ENCODE measurements at regions of chr6 and their contacts with region 1.

Region 1: DNA sequence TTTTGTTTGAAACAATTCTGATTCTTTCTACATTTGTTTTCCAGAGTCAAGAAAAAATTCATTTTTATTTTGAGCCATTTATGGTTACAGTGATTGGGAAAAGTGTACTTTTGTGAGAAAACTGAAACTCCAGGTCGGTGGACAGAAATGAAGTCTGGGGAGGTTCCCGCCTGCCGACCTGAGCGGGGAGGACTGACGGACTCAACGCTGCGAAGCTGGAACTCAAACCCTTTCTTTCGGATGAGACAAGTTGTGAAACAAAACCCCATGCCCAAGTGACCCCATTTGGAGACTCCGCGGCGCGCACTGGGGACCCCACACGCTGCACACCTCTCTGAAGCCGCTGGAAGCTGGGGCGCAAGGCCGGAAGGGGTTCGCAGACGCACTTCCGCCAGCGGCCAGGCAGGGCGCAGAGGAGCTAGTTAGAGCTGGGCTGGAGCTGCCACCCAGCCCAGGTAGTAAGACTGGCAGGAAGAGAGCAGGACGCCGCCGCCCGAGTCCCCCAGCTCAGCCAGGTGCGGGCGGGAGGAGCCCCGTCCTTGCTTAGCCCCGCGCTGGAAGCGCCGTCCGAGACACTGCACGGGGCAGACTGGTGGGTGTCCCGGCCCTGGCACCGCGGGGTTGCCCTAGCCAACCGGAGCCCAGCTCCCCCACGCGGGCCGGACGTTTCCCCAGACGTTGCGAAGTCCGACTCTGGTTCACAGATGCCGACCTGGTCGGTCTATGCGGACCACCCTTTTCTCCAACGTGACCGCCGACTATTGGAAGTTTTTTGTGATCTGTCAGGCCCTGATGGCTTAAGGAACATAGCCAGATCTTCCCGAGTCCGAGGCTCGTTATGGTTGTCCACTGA is 19.8 kb upstream of the ZSCAN16 start:
- DNase-seq: peak; percentile 86
- ATAC-seq: peak; percentile 100
- H3K4me3 Mint-ChIP-seq: peak overlapping the region; percentile 88
- H3K27ac Mint-ChIP-seq: peak overlapping the region; percentile 82
- H3K4me1 Mint-ChIP-seq: peaks cover 10% of the 10 kb centered on the region
- H3K27me3 Mint-ChIP-seq: peaks cover 15% of the 10 kb centered on the region

Region 2: DNA sequence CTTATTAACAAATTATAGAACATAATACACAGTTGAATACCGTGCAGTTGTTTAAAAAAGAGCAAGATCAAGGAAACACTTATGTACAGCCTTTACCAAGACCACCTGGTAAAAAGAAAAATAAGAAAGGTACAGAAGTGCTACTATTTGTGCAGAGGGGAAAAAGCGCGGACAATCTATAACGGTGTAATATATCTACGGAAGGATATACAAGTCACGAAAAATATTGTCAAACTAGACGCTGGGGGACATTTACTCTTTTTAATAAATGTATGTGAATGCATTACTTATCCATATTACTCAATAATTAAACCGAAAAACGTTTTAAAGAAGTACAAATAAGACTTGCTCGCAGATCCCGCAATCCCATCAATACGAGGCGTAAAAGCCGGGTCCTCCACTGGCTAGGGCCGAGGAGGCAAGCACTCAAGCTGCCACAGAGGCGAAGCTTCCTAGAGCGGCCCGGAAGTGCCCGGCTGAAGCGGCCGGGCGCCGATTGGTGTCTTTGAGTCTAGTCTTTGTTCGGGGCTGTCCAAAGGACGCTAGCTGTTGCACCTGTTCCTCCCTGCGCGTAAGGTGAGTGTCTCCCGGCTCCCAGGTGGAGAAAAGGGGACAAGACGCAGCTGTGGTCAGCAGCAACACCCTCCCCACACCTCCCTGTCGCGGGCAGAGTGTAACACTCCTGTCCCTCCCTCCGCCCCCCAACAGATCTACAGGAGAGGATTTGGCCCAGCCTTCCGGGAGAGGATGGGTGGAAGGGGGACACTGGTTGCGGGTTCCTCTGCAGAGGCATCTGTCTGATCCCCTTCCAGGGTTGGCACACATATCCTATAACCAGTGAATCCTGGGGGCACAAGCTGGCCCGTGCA is 19.7 kb after region 1 on chr6 and contains the start of gene ZSCAN16:
- POLR2A ChIA-PET with region 1: interaction called, 16 read pairs
- DNase-seq: peak; percentile 76
- ATAC-seq: peak; percentile 98
- H3K4me3 Mint-ChIP-seq: peak within 1 kb of the TSS; percentile 94
- H3K27ac Mint-ChIP-seq: peak within 1 kb of the TSS; percentile 89
- H3K4me1 Mint-ChIP-seq: peaks cover 40% of the 10 kb centered on the region
- H3K27me3 Mint-ChIP-seq: no peaks in the 10 kb centered on the region
- total RNA-seq, gene ZSCAN16: 6.9 to 8.6 TPM

Measured in activated naive CD8-positive, alpha-beta T cell treated with anti-CD3 and anti-CD28 coated beads, Interleukin-2, amount 10 ng/mL, durations not matched to agents 7 days and 5 days (primary cell).